ENCODE measurements at regions of chr2 and their contacts with region 1.

Region 1: GRCh38 chr2:162293122-162293786 is 25.2 kb downstream of the IFIH1 start:
- DNase-seq: peak; percentile 5
- H3K4me3 ChIP-seq: no peak overlapping the region
- H3K27ac ChIP-seq: no peak overlapping the region
- H3K4me1 ChIP-seq: no peaks in the 10 kb centered on the region
- H3K27me3 ChIP-seq: no peaks in the 10 kb centered on the region
- CTCF ChIP-seq: no peak
- POLR2A ChIP-seq: no peak

Region 2: GRCh38 chr2:162153608-162154224 is 139.5 kb before region 1 on chr2:
- CTCF ChIA-PET with region 1: interaction called, 101 read pairs
- POLR2A ChIA-PET with region 1: no interaction called
- dilution Hi-C with region 1: no loop called
- intact Hi-C with region 1: loop called (anchors 1 kb)
- DNase-seq: peak; percentile 66
- H3K4me3 ChIP-seq: no peak overlapping the region
- H3K27ac ChIP-seq: no peak overlapping the region
- H3K4me1 ChIP-seq: peaks cover 3% of the 10 kb centered on the region
- H3K27me3 ChIP-seq: peaks cover 1 to 20% of the 10 kb centered on the region in 2 experiments
- CTCF ChIP-seq: peak; percentile 59 to 69
- POLR2A ChIP-seq: no peak

Region 3: DNA sequence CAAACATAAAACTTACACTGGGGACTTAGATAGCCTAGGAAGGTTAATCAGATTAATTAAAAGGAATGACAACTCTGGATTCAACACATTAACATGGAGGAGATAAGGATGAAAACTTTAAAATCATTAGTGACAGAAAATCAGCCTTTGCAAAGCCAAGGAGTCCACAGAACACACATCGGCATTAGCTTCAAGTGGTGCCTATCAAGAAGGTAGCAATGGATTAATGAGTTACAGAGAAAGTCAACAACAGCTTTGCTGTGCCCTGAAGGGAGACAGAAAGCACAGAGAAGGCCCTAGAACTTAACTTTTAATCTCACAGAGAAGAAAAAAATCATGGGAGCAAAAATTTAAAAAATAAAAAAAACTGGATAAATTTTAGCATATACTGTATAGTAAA is 456.7 kb after region 1 on chr2:
- CTCF ChIA-PET with region 1: no interaction called
- POLR2A ChIA-PET with region 1: no interaction called
- dilution Hi-C with region 1: no loop called
- intact Hi-C with region 1: no loop called
- DNase-seq: no peak
- H3K4me3 ChIP-seq: no peak overlapping the region
- H3K27ac ChIP-seq: no peak overlapping the region
- H3K4me1 ChIP-seq: no peaks in the 10 kb centered on the region
- H3K27me3 ChIP-seq: no peaks in the 10 kb centered on the region
- CTCF ChIP-seq: no peak
- POLR2A ChIP-seq: no peak